Activated naive CD4-positive, alpha-beta T cell treated with anti-CD3 and anti-CD28 coated beads for 36 hours (primary cell): ENCODE measurements at regions of chr12 and their contacts with region 1.

Region 1: DNA sequence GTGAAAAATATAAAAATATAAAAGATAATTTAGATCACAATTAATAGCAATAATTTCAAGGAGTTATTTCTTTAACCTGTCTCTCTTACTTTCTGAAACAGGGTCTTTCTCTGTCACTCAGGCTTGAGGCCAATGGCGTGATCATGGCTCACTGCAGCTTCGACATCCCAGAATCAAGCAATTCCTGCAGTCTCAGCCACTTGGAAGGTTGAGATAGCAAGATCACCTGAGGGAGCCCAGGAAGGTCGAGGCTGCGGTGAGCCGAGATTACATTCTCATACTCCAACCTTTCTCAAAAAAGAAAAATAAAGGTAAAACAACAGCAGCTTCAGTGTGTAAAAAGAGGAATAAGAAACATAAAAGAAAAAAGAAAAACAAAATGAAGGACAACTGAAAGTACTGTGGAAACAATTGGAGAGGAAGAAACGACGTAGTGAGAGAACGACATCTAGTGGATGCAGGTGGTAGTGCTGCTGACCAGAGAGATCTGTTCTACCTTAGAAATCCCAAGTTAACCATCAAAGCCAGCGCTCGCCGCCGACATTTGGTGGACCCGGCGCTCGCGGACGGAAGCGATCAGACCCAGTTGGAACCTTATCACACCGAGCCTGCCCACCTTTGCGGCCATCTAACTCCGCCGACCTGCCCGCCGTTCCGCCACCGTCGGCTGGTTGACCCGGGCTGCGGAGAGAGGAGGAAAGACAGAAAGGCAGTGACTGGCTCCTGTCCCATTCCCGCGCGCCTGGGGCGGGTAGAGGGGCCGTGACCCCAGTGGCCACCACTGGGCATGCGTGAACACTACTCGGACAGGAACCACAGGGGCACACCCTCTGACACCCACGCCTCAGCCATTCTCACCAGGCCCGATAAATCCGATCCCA is 196.1 kb downstream of the ALG10 start:
- DNase-seq: peak; percentile 78
- H3K4me3 Mint-ChIP-seq: peak overlapping the region; percentile 23
- H3K27ac Mint-ChIP-seq: no peak overlapping the region
- H3K4me1 Mint-ChIP-seq: peaks cover 4% of the 10 kb centered on the region
- H3K27me3 Mint-ChIP-seq: peaks cover 15% of the 10 kb centered on the region

Region 2: GRCh38 chr12:33703221-33703620 is 515.2 kb before region 1 on chr12:
- CTCF ChIA-PET with region 1: no interaction called
- intact Hi-C with region 1: no loop called
- DNase-seq: no peak
- H3K4me3 Mint-ChIP-seq: no peak overlapping the region
- H3K27ac Mint-ChIP-seq: no peak overlapping the region
- H3K4me1 Mint-ChIP-seq: no peaks in the 10 kb centered on the region
- H3K27me3 Mint-ChIP-seq: no peaks in the 10 kb centered on the region

Region 3: GRCh38 chr12:34033628-34034282 is 184.7 kb before region 1 on chr12:
- CTCF ChIA-PET with region 1: no interaction called
- intact Hi-C with region 1: loop called (anchors 1 kb)
- DNase-seq: no peak
- H3K4me3 Mint-ChIP-seq: no peak overlapping the region
- H3K27ac Mint-ChIP-seq: no peak overlapping the region
- H3K4me1 Mint-ChIP-seq: no peaks in the 10 kb centered on the region
- H3K27me3 Mint-ChIP-seq: no peaks in the 10 kb centered on the region

Region 4: DNA sequence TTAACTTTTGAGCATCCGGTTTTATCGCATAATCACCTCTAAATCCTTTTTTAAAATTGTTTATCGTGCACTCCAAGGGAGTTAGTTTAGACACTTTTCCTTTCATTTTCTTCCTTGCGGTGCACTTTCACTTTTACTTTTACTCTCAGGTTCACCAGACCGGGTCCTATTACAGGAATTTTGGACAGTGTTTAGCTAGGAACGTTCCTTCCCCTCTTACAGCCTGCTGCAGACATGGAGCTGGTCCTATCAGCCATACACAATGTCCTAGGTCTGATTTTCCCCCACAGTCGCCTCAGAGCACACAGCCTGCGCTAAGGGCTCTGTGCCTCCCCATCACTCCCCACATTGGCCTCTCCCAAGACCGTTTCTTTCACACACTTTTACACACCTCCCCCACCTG is 92.2 kb before region 1 on chr12:
- CTCF ChIA-PET with region 1: interaction called, 10 read pairs
- intact Hi-C with region 1: loop called (anchors 1 kb)
- DNase-seq: no peak
- H3K4me3 Mint-ChIP-seq: peak overlapping the region; percentile 3
- H3K27ac Mint-ChIP-seq: no peak overlapping the region
- H3K4me1 Mint-ChIP-seq: peaks cover 9% of the 10 kb centered on the region
- H3K27me3 Mint-ChIP-seq: peaks cover 30% of the 10 kb centered on the region

Region 5: DNA sequence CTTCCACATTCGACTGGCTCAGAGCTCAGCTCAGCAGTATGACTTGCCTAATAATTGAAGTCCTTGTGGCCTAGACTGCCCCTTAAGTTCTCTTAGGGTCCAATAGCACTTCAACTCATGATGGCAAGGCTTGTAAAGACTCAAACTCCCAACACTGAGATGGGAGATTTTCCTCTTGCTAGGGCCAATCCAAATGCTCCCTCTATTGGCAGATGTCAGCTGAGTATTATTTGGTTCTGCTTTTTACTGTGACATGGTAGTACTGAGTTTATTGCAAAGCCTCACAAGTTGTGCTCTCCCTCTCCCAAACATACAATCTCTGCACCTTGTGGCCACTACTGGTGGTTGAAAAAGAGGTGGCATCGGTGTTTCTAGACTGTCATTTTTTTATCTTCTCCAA is 31.9 kb before region 1 on chr12:
- CTCF ChIA-PET with region 1: no interaction called
- intact Hi-C with region 1: no loop called
- DNase-seq: no peak
- H3K4me3 Mint-ChIP-seq: no peak overlapping the region
- H3K27ac Mint-ChIP-seq: no peak overlapping the region
- H3K4me1 Mint-ChIP-seq: no peaks in the 10 kb centered on the region
- H3K27me3 Mint-ChIP-seq: peaks cover 6% of the 10 kb centered on the region

Region 6: GRCh38 chr12:34257093-34257492 is 38.7 kb after region 1 on chr12:
- CTCF ChIA-PET with region 1: no interaction called
- intact Hi-C with region 1: no loop called
- DNase-seq: no peak
- H3K4me3 Mint-ChIP-seq: no peak overlapping the region
- H3K27ac Mint-ChIP-seq: no peak overlapping the region
- H3K4me1 Mint-ChIP-seq: no peaks in the 10 kb centered on the region
- H3K27me3 Mint-ChIP-seq: no peaks in the 10 kb centered on the region

Region 7: DNA sequence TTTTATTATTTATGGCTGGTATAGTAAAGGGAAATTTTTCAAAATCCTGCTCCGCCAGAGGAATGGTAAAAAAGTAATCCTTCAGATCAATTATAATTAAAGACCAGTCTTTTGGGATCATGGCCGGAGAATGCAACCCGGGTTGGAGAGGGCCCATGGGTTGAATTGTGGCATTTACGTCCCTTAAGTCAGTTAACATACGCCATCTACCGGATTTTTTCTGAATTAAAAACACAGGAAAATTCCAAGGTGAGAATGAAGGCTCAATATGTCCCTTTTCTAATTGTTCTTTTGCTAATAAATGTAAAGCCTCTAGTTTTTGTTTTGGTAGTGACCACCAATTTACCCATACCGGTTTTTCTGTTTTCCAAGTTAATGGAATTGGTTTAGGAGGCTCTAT is 406.7 kb after region 1 on chr12:
- CTCF ChIA-PET with region 1: no interaction called
- intact Hi-C with region 1: loop called (anchors 10 kb)
- DNase-seq: no peak
- H3K4me3 Mint-ChIP-seq: no peak overlapping the region
- H3K27ac Mint-ChIP-seq: no peak overlapping the region
- H3K4me1 Mint-ChIP-seq: no peaks in the 10 kb centered on the region
- H3K27me3 Mint-ChIP-seq: no peaks in the 10 kb centered on the region